Endothelial cell of umbilical vein (primary cell): ENCODE measurements at regions of chr1 and their contacts with region 1.

Region 1: DNA sequence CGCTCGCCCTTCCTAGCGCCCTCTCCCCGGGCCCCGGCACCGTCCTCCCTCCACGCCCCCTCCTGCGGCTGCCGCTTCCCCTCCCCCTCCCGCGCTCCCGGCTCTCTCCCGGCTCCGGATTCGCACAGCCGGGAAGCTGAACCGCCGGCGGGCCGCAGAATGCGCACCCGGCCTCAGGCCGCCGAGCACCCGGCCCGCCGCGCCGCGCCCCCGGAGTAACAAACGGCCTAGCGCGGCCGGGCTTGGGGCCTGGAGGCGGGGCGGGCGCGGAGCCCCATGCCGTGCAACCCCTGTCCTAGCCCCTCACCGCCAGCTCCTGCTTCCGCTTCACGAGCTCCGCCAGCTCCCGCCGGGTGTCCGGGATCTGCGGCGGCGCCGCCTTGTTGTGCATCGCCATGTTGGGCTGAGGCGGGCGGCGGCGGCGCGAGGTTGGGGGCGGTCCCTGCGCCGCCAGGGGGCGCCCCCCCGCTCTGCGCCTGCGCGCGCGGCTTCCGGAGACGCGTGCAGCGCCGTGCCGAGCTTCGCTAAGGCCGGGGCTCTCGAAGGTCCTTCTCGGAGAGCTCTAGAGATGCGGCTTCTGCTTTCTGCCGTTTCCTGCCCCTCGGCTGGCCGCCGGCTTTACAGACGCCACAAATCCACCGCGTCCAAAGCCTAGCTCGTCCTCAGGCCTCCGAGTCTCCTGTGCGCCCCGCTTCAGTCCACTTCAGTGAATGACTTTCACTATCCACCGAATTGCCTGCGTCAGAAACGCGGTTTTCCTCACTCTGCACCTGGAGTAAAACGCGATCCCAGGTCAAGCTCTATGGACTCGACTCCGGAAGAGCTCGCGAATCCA is at the start of gene MEAF6:
- DNase-seq: peak; percentile 85
- H3K4me3 ChIP-seq: peak within 1 kb of the TSS; percentile 72 to 81 (median 80)
- H3K27ac ChIP-seq: peak within 1 kb of the TSS; percentile 87
- H3K4me1 ChIP-seq: peaks cover 15% of the 10 kb centered on the region
- H3K27me3 ChIP-seq: no peaks in the 10 kb centered on the region
- CTCF ChIP-seq: peak; percentile 53 to 91
- POLR2A ChIP-seq: peak; percentile 63
- total RNA-seq, gene MEAF6: 50.5 and 62.5 TPM in 2 replicates

Region 2: DNA sequence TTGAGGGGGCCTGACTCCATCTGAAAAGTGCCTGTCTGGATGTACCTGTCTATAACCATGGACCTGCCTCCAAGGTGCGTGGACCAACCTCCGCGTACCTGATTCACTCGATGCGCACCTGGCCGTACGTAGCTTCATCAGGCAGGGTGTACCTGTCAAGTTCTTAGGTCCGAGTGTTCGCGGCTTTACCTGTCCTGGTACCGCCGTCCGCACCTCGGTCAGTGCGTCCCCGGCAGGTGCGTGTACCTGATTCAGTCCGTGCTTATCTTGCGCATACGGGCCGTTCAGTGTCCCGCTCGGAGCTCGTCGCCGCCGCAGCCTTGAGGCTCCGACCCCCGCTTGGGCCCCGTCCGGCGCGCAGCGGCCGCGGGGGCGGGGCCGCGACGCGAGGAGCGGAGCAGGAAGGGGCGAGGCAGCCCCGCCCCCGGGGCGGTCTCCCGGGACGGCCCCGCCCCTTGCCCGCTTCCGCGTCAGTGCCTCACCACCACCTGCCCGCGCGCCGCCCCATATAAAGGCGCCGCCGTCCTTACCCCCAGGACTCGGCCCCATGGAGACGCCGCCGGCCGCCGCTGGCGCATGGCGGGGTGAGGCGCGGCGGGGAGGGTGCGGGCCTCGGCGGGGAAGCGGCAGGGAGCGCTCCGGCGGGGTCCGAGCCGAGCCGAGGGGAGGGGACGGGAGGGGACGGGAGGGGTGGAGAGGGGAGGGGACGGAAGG is 40.4 kb before region 1 on chr1 and contains the start of gene ZC3H12A:
- CTCF ChIA-PET with region 1: interaction called, 10 read pairs
- POLR2A ChIA-PET with region 1: no interaction called
- dilution Hi-C with region 1: no loop called
- intact Hi-C with region 1: loop called (anchors 2 kb)
- DNase-seq: peak; percentile 84
- H3K4me3 ChIP-seq: peak within 1 kb of the TSS; percentile 47 to 69 (median 55)
- H3K27ac ChIP-seq: peak within 1 kb of the TSS; percentile 65
- H3K4me1 ChIP-seq: peaks cover 72% of the 10 kb centered on the region
- H3K27me3 ChIP-seq: no peaks in the 10 kb centered on the region
- CTCF ChIP-seq: no peak
- POLR2A ChIP-seq: peak; percentile 97
- total RNA-seq, gene ZC3H12A: 6.3 and 7.5 TPM in 2 replicates

Region 3: DNA sequence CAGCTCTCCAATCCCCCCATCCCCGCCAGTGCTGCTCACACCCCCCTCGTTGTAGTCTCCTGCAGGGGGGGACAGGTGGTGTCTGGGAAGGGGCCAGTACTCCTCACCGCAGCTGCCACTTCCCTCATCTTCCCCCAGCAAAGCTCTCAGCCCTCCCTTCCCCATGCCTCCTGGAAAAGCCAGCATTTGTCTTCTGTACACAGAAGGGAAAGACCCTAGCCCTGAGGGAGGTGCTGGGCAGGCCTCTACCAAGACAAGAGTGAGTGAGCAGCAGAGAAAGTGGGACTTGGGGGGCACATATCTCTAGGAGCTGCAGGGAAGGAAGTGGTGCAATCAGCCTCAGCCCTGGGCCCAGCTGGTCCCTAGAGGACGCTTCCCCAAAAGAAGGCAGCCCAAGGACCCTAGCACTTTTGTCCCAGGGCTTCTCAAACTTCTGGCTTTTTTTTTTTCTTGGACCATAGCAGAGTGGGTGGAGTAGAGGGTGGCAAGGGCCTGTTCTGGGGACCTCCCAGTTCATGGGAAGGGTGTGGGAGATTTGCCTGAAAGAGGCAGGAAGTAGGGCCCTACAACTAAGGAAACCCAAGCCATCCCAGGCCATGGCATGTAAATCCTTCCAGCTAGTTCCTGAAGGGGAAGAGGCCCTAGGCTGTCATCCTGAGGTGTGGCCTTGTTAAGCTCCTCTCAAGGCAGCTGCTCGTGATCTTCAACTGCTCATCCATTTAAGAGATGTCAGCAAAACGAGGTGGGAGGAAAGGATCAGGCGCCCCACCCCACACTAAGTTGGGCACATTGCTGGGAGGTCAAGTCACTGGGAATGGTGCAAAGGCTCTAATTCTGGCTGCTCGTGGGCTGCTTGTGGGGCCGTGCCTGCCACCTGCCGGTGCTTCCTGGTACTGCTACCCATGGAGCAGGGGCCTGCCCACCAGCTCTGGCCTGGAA is 27.6 kb before region 1 on chr1:
- CTCF ChIA-PET with region 1: interaction called, 26 read pairs
- POLR2A ChIA-PET with region 1: no interaction called
- dilution Hi-C with region 1: no loop called
- intact Hi-C with region 1: no loop called
- DNase-seq: peak; percentile 74
- H3K4me3 ChIP-seq: no peak overlapping the region
- H3K27ac ChIP-seq: no peak overlapping the region
- H3K4me1 ChIP-seq: peaks cover 2% of the 10 kb centered on the region
- H3K27me3 ChIP-seq: no peaks in the 10 kb centered on the region
- CTCF ChIP-seq: peak; percentile 97
- POLR2A ChIP-seq: no peak

Region 4: GRCh38 chr1:37537378-37537777 is 22.8 kb after region 1 on chr1:
- CTCF ChIA-PET with region 1: interaction called, 11 read pairs
- POLR2A ChIA-PET with region 1: no interaction called
- dilution Hi-C with region 1: no loop called
- intact Hi-C with region 1: loop called (anchors 1 kb)
- DNase-seq: no peak
- H3K4me3 ChIP-seq: no peak overlapping the region
- H3K27ac ChIP-seq: no peak overlapping the region
- H3K4me1 ChIP-seq: peaks cover 17% of the 10 kb centered on the region
- H3K27me3 ChIP-seq: no peaks in the 10 kb centered on the region
- CTCF ChIP-seq: no peak
- POLR2A ChIP-seq: no peak

Region 5: DNA sequence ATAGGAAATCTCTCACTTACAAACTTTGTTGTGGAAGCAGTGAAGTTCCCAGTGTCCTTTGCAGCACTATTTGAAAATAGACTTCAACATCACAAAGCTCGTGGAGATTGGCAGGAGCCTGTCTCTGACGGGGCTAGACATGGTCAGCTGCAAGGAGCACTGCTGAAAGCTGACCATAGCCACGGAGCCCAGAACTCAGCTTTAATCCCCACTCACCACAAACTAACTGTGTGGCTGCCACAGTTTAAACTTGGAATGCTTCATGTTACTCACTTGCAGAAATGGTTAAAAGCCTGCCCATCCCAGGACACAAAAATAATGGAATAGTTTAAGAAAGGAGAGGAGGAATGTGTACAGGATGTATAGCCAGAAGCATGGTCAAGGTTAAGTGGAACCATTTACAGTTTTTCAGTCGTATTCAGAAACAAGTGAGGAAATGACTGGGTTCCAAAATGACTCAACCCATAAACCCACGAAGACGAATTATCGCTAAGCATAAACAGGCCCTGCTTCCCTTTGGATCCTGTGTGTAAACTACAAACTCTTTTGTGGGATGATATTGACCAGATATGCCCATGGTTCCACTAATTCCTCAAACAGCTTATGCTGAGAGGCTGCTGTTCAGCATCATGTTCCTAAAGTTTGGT is 60.4 kb after region 1 on chr1:
- CTCF ChIA-PET with region 1: interaction called, 4 read pairs
- POLR2A ChIA-PET with region 1: no interaction called
- dilution Hi-C with region 1: no loop called
- intact Hi-C with region 1: loop called (anchors 1 kb)
- DNase-seq: peak; percentile 81
- H3K4me3 ChIP-seq: no peak overlapping the region
- H3K27ac ChIP-seq: peak overlapping the region; percentile 72
- H3K4me1 ChIP-seq: peaks cover 36% of the 10 kb centered on the region
- H3K27me3 ChIP-seq: no peaks in the 10 kb centered on the region
- CTCF ChIP-seq: no peak
- POLR2A ChIP-seq: no peak

Region 6: GRCh38 chr1:37682334-37682987 is 167.9 kb after region 1 on chr1:
- CTCF ChIA-PET with region 1: interaction called, 3 read pairs
- POLR2A ChIA-PET with region 1: no interaction called
- dilution Hi-C with region 1: no loop called
- intact Hi-C with region 1: loop called (anchors 1 kb)
- DNase-seq: peak; percentile 61
- H3K4me3 ChIP-seq: no peak overlapping the region
- H3K27ac ChIP-seq: no peak overlapping the region
- H3K4me1 ChIP-seq: no peaks in the 10 kb centered on the region
- H3K27me3 ChIP-seq: no peaks in the 10 kb centered on the region
- CTCF ChIP-seq: peak; percentile 73 to 81
- POLR2A ChIP-seq: no peak